ENCODE measurements at regions of chr17 and their contacts with region 1.

Region 1: GRCh38 chr17:82037113-82037888 is at the start of gene DCXR:
- DNase-seq: peak; percentile 92 to 96 (median 95)
- H3K4me3 ChIP-seq: peak within 1 kb of the TSS; percentile 65
- H3K4me3 Mint-ChIP-seq: peak within 1 kb of the TSS; percentile 82 to 97 (median 88)
- H3K27ac ChIP-seq: peak within 1 kb of the TSS; percentile 59
- H3K27ac Mint-ChIP-seq: peak within 1 kb of the TSS; percentile 69 to 96 (median 85)
- H3K4me1 ChIP-seq: peaks cover 16% of the 10 kb centered on the region
- H3K4me1 Mint-ChIP-seq: peaks cover 16 to 32% (median 22%) of the 10 kb centered on the region in 3 donors
- H3K27me3 ChIP-seq: no peaks in the 10 kb centered on the region
- H3K27me3 Mint-ChIP-seq: no peaks in the 10 kb centered on the region
- total RNA-seq, gene DCXR: 117 to 127 TPM

Region 2: DNA sequence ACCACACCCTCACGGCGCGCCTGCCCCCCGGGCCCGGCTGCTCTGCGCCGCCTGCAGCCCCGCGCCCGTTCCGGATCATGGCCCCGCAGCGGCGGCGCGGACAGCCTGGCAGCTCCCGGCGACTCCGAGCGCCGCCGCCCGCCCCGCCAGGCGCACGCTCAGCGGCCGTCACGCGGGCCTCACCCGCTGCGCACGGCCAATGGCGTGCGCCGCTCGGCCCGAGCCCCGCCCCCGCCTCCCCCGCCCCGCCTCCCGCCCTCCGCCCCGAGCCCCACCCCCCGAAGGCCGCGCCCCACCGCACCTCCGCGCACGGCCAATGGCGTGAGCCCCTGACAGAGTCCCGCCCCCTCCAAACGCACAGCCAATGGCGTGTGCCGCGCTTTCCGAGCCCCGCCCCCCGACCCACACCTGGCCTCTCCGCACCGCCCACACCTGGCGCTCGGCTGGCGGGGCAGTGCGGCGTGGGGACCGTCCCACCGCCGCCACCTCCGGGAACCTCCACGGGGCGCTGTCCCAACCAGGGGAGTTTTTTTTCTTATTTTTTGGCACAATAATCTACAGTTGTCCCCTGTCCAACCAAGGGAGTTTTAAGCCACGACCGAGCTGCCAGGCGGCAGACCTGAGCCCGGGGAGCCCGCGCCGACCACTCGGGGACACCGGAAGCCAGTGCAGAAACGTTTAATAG is 125.9 kb before region 1 on chr17 and contains the start of gene PCYT2:
- CTCF ChIA-PET with region 1: no interaction called
- POLR2A ChIA-PET with region 1: no interaction called
- DNase-seq: peak; percentile 89 to 95 (median 91)
- H3K4me3 ChIP-seq: peak within 1 kb of the TSS; percentile 68
- H3K4me3 Mint-ChIP-seq: peak within 1 kb of the TSS; percentile 84 to 90 (median 88)
- H3K27ac ChIP-seq: peak within 1 kb of the TSS; percentile 69
- H3K27ac Mint-ChIP-seq: peak within 1 kb of the TSS in 7 of 8 donors; percentile 54 to 88 (median 70)
- H3K4me1 ChIP-seq: peaks cover 21% of the 10 kb centered on the region
- H3K4me1 Mint-ChIP-seq: peaks cover 7 to 35% (median 10%) of the 10 kb centered on the region in 3 donors
- H3K27me3 ChIP-seq: no peaks in the 10 kb centered on the region
- H3K27me3 Mint-ChIP-seq: no peaks in the 10 kb centered on the region
- total RNA-seq, gene PCYT2: 30.3 to 31.6 TPM

Region 3: DNA sequence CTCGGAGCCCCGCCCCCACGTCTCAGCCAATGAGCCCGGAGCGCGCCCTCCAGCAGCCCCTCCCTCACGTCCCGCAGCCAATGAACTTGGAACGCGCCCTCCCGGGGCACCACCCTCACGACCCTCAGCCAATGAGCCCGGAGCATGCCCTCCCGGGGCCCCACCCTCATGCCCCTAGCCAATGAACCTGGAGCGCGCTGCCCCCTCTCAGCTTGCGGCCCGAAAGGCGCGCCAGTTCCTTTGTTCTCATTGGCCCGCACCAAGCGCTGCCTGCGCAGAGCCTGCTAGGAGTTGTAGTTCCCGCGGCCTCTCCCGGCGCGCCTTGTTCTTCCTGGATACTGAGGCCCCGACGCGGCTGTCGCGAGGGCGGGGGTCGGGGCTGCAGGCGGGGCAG is 14.3 kb before region 1 on chr17 and contains the start of gene LRRC45:
- CTCF ChIA-PET with region 1: interaction called, 23 read pairs
- POLR2A ChIA-PET with region 1: interaction called, 10 read pairs
- DNase-seq: peak; percentile 99 to 100 (median 100)
- H3K4me3 ChIP-seq: peak within 1 kb of the TSS; percentile 70
- H3K4me3 Mint-ChIP-seq: peak within 1 kb of the TSS; percentile 83 to 93 (median 85)
- H3K27ac ChIP-seq: peak within 1 kb of the TSS; percentile 61
- H3K27ac Mint-ChIP-seq: peak within 1 kb of the TSS in 6 of 8 donors; percentile 56 to 85 (median 70)
- H3K4me1 ChIP-seq: peaks cover 26% of the 10 kb centered on the region
- H3K4me1 Mint-ChIP-seq: peaks cover 17 to 34% (median 21%) of the 10 kb centered on the region in 3 donors
- H3K27me3 ChIP-seq: no peaks in the 10 kb centered on the region
- H3K27me3 Mint-ChIP-seq: peaks cover 0 to 2% of the 10 kb centered on the region in 2 donors
- total RNA-seq, gene LRRC45: 26.8 to 27.6 TPM

Region 4: GRCh38 chr17:82051776-82052637 is 14.7 kb after region 1 on chr17 and contains the starts of genes GPS1 and RFNG:
- CTCF ChIA-PET with region 1: interaction called, 23 read pairs
- POLR2A ChIA-PET with region 1: interaction called, 7 read pairs
- DNase-seq: peak; percentile 69 to 86 (median 77)
- H3K4me3 ChIP-seq: peak within 1 kb of the TSS; percentile 67
- H3K4me3 Mint-ChIP-seq: peak within 1 kb of the TSS; percentile 79 to 90 (median 81)
- H3K27ac ChIP-seq: peak within 1 kb of the TSS; percentile 54
- H3K27ac Mint-ChIP-seq: peak within 1 kb of the TSS in 6 of 8 donors; percentile 71 to 87 (median 82)
- H3K4me1 ChIP-seq: peaks cover 25% of the 10 kb centered on the region
- H3K4me1 Mint-ChIP-seq: peaks cover 0 to 26% (median 15%) of the 10 kb centered on the region in 3 donors
- H3K27me3 ChIP-seq: no peaks in the 10 kb centered on the region
- H3K27me3 Mint-ChIP-seq: no peaks in the 10 kb centered on the region
- total RNA-seq, gene GPS1: 122 to 125 TPM
- total RNA-seq, gene RFNG: 18.1 to 19.4 TPM

Region 5: DNA sequence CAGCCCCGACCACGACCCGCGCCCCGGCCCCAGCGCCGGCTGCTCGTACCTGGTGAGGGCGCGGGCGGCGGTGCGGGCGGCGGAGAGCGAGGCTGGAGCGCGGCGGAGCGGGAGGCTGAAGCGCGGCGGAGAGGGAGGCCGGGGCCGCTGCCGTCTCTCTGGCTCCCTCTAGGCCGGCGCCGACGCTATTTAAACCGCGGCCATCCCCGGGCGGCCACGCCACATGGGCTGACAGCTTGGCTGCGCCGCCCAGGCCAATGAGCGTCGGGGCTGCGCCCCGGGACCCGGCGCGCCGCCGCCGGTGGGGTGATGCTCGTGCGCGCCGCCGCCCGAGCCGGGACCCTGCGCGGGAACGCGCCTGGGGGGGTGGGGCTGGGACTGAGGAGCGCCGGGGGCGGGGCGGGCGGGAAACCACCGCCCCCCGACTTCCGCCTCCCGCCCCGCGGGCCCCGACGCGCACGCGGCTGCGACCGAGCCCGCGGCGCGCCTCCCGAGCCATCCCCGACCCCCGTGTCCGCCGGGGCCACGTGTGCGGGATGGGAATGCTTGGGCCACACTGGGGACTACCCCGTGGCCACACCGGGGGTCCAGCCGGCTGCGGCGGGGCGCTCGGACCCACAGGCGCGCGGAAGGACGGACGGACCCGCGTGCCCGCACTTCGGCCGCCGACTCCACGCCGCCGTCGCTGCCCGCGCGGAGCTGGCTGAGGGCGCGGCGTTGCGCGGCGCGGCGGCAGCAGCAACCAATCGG is 60.9 kb after region 1 on chr17 and contains the start of gene FASN:
- CTCF ChIA-PET with region 1: interaction called, 3 read pairs
- POLR2A ChIA-PET with region 1: interaction called, 15 read pairs
- DNase-seq: peak; percentile 87 to 93 (median 90)
- H3K4me3 ChIP-seq: peak within 1 kb of the TSS; percentile 58
- H3K4me3 Mint-ChIP-seq: peak within 1 kb of the TSS; percentile 50 to 88 (median 80)
- H3K27ac ChIP-seq: peak within 1 kb of the TSS; percentile 76
- H3K27ac Mint-ChIP-seq: peak within 1 kb of the TSS in 4 of 8 donors; percentile 43 to 80 (median 63)
- H3K4me1 ChIP-seq: peaks cover 14% of the 10 kb centered on the region
- H3K4me1 Mint-ChIP-seq: peaks cover 0 to 14% (median 6%) of the 10 kb centered on the region in 3 donors
- H3K27me3 ChIP-seq: no peaks in the 10 kb centered on the region
- H3K27me3 Mint-ChIP-seq: no peaks in the 10 kb centered on the region
- total RNA-seq, gene FASN: 251 to 259 TPM

Region 6: DNA sequence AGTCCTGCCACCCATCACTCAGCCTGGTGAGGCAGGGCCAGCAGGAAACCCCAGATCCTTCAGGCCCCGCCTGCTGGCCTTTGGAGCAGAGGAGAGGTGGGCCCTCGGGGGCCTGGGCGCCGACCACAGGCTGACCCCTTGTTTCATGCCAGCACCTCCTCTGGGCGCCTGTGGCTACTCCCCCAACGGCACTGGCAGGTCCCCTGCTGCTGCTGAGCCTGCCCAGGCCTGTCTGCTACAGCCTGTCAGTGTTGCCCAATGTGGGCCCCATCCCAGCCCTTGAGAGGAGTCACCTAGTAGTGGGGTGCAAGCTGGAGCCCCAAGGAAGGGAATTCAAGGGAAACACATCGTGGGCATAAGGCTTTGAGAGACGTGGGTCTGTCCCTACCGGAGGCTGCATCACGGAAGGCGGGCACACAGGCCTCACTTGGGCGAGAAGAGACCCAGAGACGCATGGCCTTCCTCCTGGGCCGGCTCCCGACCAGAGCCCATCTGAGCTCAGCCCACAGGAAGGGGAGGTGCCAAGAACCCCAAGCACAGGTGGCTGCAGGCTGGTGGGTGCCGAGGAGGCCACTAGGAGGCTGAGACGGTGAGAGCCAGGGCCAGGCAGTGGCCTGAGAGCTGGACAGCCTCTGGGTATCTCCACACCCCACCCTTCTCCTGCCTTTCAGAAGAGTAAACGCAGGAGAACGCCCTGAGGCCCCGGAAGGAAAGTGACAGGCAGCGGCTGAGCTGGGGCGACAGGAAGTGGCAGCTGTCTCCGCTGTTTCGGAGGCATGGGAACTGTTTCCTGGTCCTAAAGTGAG is 68.8 kb after region 1 on chr17:
- CTCF ChIA-PET with region 1: interaction called, 12 read pairs
- POLR2A ChIA-PET with region 1: no interaction called
- DNase-seq: peak; percentile 36 to 70 (median 54)
- H3K4me3 ChIP-seq: peak overlapping the region; percentile 88
- H3K4me3 Mint-ChIP-seq: peak overlapping the region; percentile 86 to 96 (median 90)
- H3K27ac ChIP-seq: peak overlapping the region; percentile 64
- H3K27ac Mint-ChIP-seq: peak overlapping the region; percentile 88 to 100 (median 96)
- H3K4me1 ChIP-seq: peaks cover 28% of the 10 kb centered on the region
- H3K4me1 Mint-ChIP-seq: peaks cover 19 to 38% (median 31%) of the 10 kb centered on the region in 3 donors
- H3K27me3 ChIP-seq: no peaks in the 10 kb centered on the region
- H3K27me3 Mint-ChIP-seq: no peaks in the 10 kb centered on the region

Measured in CD8-positive, alpha-beta memory T cell (primary cell).